ENCODE measurements at regions of chr13 and their contacts with region 1.

Region 1: DNA sequence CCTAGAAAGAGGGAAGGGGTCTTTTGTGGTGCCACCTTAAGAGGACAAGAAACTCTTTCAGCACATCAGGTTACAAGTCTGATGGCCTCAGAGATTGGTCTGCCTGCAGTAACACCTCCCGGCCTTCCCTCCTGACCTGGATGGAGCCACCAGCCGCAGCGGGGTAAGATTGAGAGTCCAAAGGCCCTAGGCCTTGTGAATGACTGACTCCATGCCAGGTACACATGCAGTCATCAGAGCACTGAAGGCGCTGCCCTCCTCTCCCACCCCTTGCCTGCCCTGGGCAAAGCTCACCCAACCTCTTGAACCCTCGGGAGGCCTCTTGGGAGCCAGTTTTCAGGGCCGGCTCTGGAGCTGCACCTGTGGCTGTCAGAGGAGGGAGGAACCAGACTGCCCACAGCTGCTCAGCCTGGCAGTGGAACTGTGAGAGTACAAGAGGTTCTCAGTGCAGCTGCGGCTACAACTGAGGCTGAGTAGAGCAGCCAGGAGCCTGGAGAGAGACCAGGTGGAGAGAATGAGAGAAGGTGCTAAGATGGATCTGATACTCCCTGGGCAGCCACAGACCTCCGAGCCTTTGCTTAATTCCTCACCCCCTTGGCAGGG is 23.8 kb upstream of the C13orf42 start:
- DNase-seq: no peak

Region 2: GRCh38 chr13:51213173-51213728 is 78.4 kb after region 1 on chr13:
- intact Hi-C with region 1: loop called (anchors 5 kb)
- DNase-seq: no peak